ENCODE measurements at regions of chr2 and their contacts with region 1.

Region 1: GRCh38 chr2:235595422-235596010 is 101.7 kb downstream of the AGAP1 start:
- DNase-seq: peak; percentile 51
- H3K4me3 ChIP-seq: no peak overlapping the region
- H3K27ac ChIP-seq: no peak overlapping the region
- H3K27me3 ChIP-seq: no peaks in the 10 kb centered on the region
- CTCF ChIP-seq: peak; percentile 93

Region 2: DNA sequence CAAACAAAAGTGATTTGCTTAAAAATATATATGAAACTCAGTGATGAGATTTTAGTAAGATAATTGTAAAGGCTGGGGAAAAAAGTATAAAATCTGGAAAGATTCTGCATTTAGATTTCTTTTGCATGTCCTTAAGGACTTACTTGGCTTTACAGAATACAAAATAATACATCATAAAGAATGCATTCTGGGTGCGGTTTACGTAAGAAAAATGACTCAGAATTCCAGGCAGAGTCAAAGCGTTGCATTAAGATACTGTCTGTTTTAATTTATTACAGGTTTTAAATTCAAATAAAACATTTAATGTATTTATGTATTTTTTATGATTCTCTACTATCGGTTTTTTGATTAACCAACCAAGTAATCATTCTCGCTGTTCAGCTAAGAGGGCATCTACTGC is 465.7 kb before region 1 on chr2:
- CTCF ChIA-PET with region 1: interaction called, 164 read pairs
- POLR2A ChIA-PET with region 1: no interaction called
- DNase-seq: no peak
- H3K4me3 ChIP-seq: no peak overlapping the region
- H3K27ac ChIP-seq: no peak overlapping the region
- H3K27me3 ChIP-seq: peaks cover 17% of the 10 kb centered on the region
- CTCF ChIP-seq: no peak

Region 3: DNA sequence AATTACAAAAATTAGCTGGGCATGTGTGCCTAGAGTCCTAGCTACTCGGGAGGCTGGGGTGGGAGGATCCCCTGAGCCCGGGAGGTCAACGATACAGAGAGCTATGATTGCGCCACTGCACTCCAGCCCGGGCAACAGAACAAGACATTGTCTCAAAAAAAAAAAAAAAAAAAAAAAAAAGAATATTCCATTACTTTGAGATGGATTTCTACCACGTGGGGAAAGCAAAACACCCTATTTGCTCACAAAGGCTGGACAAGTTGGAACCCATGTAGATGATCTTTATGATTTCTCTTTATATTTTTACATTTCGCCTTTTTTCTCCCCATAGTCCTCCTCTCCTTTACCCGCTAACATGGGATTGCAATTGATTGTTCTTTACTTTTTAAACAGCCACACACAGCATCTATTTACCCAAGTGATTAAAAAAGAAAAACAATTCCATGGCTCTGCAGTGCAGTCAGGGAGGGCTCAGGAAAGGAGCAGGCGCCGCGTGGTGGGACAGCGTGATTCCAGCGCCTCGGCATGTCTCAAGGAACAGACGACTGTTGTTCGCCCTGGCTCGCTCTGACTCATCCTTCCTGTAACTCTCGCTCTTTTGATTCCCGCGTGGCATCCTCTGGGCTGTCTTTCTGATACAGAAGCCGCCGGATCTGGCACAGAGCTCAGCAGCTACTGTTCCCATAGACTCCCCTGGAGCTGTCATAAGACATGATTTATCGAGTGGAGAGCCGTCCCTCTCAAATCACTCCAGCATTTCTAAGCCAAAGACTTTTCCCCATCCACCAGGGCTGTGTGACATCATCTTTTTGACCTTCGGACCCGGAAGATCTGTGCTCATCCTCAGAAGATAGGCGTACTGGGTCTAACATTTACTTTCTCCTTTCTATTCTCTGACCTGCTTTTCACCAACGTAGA is 332.1 kb before region 1 on chr2:
- CTCF ChIA-PET with region 1: interaction called, 11 read pairs
- POLR2A ChIA-PET with region 1: no interaction called
- DNase-seq: peak; percentile 70
- H3K4me3 ChIP-seq: peak overlapping the region; percentile 41
- H3K27ac ChIP-seq: peak overlapping the region; percentile 65
- H3K27me3 ChIP-seq: no peaks in the 10 kb centered on the region
- CTCF ChIP-seq: no peak

Region 4: DNA sequence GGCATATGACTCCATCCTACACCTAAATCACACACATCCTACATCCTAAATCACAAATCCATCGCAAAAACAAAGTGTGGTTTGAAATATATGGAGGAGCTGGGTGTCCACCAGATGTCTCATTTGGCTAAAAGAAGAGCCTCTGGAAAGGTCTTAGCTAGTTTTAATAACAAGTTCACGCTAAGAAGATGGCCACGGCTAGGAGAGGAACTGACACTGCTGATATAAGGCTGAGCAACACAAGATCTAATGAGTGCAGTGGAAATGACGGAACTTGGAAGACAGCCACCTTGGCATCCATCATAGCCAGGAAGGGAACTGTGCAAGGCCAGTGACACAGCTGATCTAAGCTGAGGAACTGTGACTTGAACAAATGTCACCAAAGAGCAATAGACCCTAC is 161.7 kb before region 1 on chr2:
- CTCF ChIA-PET with region 1: interaction called, 10 read pairs
- POLR2A ChIA-PET with region 1: no interaction called
- DNase-seq: no peak
- H3K4me3 ChIP-seq: no peak overlapping the region
- H3K27ac ChIP-seq: no peak overlapping the region
- H3K27me3 ChIP-seq: peaks cover 19% of the 10 kb centered on the region
- CTCF ChIP-seq: no peak

Region 5: DNA sequence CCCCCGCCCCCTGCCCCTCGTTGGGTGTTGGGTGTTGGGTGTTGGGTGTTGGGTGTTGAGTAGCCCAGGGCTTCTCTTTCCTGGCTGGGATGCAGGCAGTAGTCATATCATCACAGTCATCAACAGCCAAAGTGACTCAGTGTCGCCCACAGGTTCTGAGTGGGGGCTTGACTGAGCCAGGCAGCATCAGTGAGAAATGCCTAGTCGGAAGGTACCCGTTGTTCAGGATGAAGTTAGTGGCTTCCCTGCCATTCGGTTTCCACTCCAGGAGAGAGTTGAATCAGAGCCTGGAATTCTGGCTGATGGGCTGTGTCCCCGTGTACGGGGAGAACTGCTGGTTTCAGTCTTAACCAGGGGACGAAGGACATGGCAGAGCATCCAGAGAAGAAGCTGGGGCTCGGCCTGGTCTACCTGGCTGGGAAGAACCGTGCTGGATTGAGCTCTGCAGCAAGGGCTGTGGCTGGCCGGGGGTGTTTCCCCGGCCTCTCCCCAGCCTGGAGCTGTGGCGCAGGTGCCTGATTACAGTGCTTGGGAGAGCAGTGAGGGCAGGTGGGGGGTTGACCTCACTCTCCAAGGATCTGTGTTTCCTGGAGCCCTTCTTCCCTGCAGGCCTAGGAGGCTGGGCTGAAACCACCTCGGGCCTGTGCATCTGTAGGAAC is 52.3 kb before region 1 on chr2:
- CTCF ChIA-PET with region 1: no interaction called
- POLR2A ChIA-PET with region 1: no interaction called
- DNase-seq: no peak
- H3K4me3 ChIP-seq: no peak overlapping the region
- H3K27ac ChIP-seq: no peak overlapping the region
- H3K27me3 ChIP-seq: no peaks in the 10 kb centered on the region
- CTCF ChIP-seq: no peak

Region 6: DNA sequence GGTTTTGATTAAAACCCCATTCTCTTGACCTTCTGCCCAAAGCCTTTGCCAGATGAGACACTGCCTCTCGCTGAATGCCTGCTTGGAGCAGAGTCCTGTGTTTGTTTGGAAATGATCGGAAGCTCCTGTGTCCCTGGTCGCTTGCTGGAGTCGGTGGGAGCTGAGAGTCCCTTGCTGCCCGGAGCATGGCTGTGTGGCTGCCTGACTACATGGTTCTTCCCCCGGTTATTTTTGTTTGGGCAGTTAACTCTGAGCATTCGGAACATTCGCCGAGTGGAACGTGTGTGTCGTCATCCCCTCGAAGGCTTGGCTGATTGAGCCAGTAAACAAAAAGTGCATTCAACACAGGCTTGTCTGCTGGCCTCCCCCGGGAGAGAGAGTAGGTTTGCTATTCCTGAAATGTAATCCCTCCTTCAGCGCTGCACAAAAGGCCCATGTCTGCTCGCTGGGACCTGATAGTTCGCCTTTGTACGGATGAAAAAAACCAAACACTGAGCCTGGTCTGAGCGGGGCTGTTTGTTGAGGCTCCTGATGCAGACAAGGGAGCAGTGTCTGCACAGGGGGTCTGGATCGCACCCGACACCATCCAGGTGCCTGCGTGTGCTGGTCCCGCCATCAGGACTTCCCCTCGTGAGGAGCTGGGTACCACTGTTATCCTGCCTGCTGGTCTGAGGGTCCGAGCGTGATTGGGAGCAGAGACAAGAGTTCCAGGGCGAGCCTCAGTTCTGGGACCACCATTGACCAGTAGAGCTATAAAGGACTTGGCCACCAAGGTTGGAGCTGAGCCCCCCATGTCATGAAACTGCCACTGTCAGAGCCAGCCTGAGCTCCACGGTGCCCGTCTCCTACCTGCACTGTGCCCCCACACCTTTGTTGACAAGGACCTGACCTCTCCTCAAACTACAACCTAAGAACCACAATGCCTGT is 17.8 kb before region 1 on chr2:
- CTCF ChIA-PET with region 1: interaction called, 61 read pairs
- POLR2A ChIA-PET with region 1: no interaction called
- DNase-seq: peak; percentile 18
- H3K4me3 ChIP-seq: no peak overlapping the region
- H3K27ac ChIP-seq: peak overlapping the region; percentile 21
- H3K27me3 ChIP-seq: no peaks in the 10 kb centered on the region
- CTCF ChIP-seq: no peak

Region 7: DNA sequence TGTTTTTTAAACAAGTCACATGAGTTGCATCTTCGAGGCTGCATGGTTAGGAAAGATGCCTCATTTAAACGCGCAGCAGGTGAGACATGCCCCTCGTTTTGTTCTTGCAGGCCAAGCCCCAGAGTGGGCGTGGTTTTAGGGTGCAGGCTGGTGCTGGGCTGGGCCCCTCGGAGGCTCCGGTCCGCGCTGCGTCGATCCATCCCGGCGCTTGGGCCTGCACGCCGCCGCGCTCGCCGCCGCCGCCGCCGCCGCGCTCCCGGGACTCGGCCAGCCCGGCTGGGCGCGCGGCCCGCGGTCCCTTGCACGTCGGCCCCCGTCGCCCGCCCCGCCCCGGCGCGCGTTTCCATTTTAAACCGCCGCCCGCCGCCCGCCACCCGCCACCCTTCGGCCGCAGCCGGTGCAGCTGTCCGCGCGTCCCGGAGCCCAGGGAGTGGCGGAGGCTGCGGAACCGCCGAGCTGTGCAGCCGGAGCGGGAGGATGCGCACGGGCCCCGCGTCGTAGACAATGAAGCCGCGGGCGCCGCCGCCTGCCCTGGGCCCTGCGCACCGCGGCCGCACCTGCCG is 73.8 kb after region 1 on chr2:
- CTCF ChIA-PET with region 1: interaction called, 80 read pairs
- POLR2A ChIA-PET with region 1: no interaction called
- DNase-seq: no peak
- H3K4me3 ChIP-seq: peak overlapping the region; percentile 56
- H3K27ac ChIP-seq: no peak overlapping the region
- H3K27me3 ChIP-seq: no peaks in the 10 kb centered on the region
- CTCF ChIP-seq: no peak

Measured in AG04450 (cell line).